Activated naive CD4-positive, alpha-beta T cell treated with anti-CD3 and anti-CD28 coated beads for 36 hours (primary cell): ENCODE measurements at regions of chr7 and their contacts with region 1.

Region 1: GRCh38 chr7:155205368-155206317 is 92.0 kb upstream of the INSIG1 start:
- DNase-seq: peak; percentile 96
- H3K4me3 Mint-ChIP-seq: peak overlapping the region; percentile 69
- H3K27ac Mint-ChIP-seq: peak overlapping the region; percentile 92
- H3K4me1 Mint-ChIP-seq: peaks cover 35% of the 10 kb centered on the region
- H3K27me3 Mint-ChIP-seq: no peaks in the 10 kb centered on the region

Region 2: DNA sequence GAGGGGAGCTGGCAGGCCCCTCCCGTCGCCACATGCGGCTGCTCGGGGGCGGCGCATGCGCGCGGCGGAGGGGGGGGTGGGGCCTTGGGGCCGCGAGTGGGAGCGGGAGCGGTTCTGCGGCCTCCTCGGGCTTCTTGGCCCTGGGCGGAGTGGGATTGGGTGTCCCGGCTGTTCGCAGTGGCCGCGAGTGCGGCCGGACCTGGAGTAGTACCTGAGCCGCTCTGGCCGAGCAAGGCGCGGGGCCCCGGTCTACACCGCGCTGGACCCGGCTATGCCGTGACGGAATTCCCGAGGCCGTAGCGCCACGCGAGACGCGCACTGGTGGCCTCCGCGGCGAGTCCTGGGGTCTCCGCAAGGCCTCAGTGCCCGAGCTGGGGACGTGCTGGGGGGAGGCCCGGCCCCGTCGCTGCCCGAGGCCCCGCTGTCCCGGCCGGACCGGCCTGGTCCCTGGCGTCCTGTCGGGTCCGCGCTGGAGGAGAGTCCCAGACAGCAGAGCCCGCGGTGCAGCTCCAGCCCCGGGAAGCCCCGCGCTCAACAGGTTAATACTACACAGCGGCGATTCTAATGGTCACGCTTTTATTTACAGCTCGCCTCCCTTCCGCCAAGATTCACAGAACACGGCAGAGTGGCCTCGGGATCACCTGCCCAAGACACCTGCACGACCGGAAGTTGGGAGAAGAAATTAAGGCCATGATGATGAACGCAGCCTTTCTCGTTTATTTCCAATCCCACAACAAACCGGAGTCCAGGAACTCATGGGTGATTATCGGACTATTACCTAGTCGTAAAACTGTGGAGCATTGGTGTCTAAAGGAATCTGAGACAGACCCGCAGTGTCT is 202.0 kb before region 1 on chr7:
- CTCF ChIA-PET with region 1: no interaction called
- intact Hi-C with region 1: loop called (anchors 2 kb)
- DNase-seq: peak; percentile 75
- H3K4me3 Mint-ChIP-seq: peak overlapping the region; percentile 92
- H3K27ac Mint-ChIP-seq: peak overlapping the region; percentile 89
- H3K4me1 Mint-ChIP-seq: peaks cover 7% of the 10 kb centered on the region
- H3K27me3 Mint-ChIP-seq: no peaks in the 10 kb centered on the region

Region 3: GRCh38 chr7:155141562-155141961 is 64.1 kb before region 1 on chr7:
- CTCF ChIA-PET with region 1: no interaction called
- intact Hi-C with region 1: no loop called
- DNase-seq: no peak
- H3K4me3 Mint-ChIP-seq: no peak overlapping the region
- H3K27ac Mint-ChIP-seq: no peak overlapping the region
- H3K4me1 Mint-ChIP-seq: no peaks in the 10 kb centered on the region
- H3K27me3 Mint-ChIP-seq: peaks cover 21% of the 10 kb centered on the region

Region 4: DNA sequence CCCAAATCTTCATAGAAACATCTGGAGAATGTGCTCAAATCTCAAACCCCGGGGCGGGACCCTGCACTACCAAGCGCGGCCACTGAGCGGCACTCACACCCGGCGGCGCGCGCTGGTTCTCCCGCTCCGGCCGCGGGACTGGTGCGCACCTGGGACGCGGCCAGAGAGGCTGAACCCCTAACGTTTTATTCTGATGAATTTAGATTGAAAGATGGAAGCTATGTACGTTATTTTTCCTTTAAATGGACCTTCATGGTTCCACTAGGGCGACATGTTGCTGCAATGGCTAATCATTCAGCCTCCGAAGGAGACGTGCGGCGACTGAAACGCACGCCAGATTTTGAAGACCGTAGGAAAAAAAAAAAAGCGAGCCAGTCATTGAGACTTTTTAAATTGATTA is 15.0 kb before region 1 on chr7:
- CTCF ChIA-PET with region 1: interaction called, 5 read pairs
- intact Hi-C with region 1: loop called (anchors 1 kb)
- DNase-seq: peak; percentile 69
- H3K4me3 Mint-ChIP-seq: no peak overlapping the region
- H3K27ac Mint-ChIP-seq: no peak overlapping the region
- H3K4me1 Mint-ChIP-seq: peaks cover 11% of the 10 kb centered on the region
- H3K27me3 Mint-ChIP-seq: peaks cover 13% of the 10 kb centered on the region

Region 5: GRCh38 chr7:155283565-155284194 is 78.0 kb after region 1 on chr7:
- CTCF ChIA-PET with region 1: no interaction called
- intact Hi-C with region 1: loop called (anchors 1 kb)
- DNase-seq: peak; percentile 60
- H3K4me3 Mint-ChIP-seq: no peak overlapping the region
- H3K27ac Mint-ChIP-seq: no peak overlapping the region
- H3K4me1 Mint-ChIP-seq: peaks cover 56% of the 10 kb centered on the region
- H3K27me3 Mint-ChIP-seq: peaks cover 3% of the 10 kb centered on the region

Region 6: DNA sequence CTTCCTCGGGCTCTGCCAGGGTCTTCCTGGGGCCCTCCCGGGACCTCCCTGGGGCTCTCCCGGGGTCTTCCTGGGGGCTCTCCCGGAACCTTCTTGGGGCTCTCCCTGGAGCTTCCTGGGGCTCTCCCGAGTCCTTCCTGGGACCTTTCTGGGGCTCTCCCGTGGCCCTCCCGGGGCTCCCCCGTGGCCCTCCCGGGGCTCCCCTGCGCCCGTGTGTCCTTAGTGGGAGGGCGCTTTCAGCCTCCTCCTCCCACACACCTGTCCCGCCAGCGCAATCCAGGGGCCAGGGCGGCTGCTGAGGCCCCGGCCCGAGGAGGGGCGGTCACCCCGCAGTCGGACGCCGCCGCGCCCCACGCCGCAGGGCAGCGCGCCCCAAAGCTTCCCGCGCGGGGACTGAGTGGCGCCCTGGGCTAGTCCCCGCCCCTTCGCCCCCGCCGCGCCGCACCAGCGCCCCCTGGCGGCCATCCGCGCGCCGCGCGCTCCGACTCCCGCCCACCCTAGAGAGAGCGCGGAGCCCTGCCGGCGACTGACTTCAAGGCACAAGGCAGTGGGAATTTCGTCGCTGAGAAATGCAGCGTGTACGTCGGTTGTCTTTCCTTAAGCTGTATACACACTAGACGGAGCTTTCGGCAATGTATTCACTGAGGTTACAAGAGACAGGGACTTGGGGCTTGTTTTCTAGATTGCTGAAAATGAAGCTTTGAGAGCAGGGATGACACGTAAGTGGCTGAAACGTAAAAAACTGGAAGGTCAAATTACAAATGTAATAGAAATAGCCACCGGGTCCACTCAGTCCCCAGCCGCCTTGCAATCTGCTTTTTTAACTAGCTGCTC is 139.2 kb after region 1 on chr7:
- CTCF ChIA-PET with region 1: interaction called, 18 read pairs
- intact Hi-C with region 1: loop called (anchors 1 kb)
- DNase-seq: peak; percentile 87
- H3K4me3 Mint-ChIP-seq: peak overlapping the region; percentile 53
- H3K27ac Mint-ChIP-seq: no peak overlapping the region
- H3K4me1 Mint-ChIP-seq: peaks cover 13% of the 10 kb centered on the region
- H3K27me3 Mint-ChIP-seq: peaks cover 12% of the 10 kb centered on the region

Region 7: DNA sequence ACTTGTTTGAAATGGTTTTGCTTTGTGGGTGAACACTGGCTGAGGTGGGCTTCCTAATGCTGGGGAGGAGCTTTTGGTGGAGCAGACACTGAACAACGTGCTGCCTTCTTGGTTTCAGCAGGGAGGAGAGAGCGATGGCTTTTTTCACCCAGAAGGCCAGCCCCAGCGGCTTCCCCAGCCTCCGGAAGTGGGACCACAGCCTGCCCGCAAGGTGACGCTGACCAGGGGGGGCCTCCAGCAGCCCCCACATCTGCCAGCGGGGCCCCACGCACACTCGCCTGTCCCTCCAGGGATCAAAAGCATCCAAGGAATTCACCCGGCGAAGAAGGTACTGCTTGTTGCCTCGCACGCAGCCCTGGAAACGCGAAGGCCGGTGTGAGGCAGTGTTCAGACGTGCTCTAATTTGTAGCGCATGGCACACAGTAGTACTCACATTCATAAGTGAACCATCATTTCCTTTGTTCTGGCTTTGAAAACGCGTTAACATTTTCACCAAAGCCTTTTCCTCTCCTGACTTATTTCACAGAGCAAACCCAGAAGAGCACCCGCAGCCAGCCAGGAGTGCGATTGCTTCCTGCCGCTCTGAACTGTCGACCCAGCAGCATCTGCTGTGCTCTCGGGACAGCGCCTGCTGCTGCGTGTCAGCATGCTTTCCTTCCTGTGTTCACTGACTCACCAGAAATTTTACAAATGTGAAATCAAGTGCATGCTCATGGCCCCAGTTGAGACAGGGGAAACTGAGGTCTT is 558.2 kb after region 1 on chr7:
- CTCF ChIA-PET with region 1: no interaction called
- intact Hi-C with region 1: loop called (anchors 5 kb)
- DNase-seq: peak; percentile 82
- H3K4me3 Mint-ChIP-seq: peak overlapping the region; percentile 70
- H3K27ac Mint-ChIP-seq: peak overlapping the region; percentile 95
- H3K4me1 Mint-ChIP-seq: peaks cover 42% of the 10 kb centered on the region
- H3K27me3 Mint-ChIP-seq: no peaks in the 10 kb centered on the region

Region 8: DNA sequence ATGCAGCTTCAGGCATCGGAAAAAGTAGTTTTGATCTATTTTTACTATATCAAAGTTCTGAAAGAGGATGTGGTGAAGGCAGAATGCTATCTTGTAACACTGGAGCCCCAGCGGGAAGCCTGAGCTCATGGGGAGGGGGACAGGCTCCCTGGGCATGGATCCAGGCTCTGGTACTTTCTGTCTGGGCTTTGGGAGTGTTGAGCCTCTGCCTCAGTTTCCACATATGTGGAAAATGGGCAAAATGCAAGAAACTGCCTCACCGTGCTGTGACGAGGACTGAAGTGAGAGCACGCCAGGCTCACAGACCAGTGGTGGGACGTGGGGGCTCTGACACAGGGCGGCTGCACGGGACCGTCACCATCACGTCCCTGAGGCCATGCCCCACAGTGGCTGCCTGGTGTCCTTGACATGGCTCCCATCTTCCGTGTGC is 789.6 kb after region 1 on chr7:
- CTCF ChIA-PET with region 1: no interaction called
- intact Hi-C with region 1: loop called (anchors 5 kb)
- DNase-seq: peak; percentile 30
- H3K4me3 Mint-ChIP-seq: no peak overlapping the region
- H3K27ac Mint-ChIP-seq: no peak overlapping the region
- H3K4me1 Mint-ChIP-seq: peaks cover 53% of the 10 kb centered on the region
- H3K27me3 Mint-ChIP-seq: peaks cover 30% of the 10 kb centered on the region